Activated naive CD4-positive, alpha-beta T cell treated with anti-CD3 and anti-CD28 coated beads for 36 hours (primary cell): ENCODE measurements at regions of chr10 and their contacts with region 1.

Region 1: DNA sequence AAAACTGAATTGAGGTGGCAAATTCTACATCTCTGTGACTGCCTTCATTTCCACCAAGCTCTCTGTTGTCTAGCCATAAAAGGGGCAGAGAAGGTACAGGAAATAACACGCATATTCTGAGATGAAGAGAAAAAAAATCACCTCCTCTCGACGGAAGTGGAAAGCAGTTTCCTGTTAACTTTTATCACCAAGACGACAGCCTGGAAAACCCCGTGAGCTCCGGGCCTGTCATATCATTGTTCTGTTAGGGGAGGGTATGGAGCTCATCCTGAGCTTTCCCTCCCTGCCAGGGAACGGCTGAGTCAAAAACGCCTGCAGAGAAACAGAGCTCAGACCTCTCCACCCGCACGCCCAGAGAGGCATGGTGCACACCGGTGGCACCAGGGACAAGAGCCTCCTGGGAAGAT is 200.3 kb downstream of the PRPF18 start:
- DNase-seq: peak; percentile 92
- H3K4me3 Mint-ChIP-seq: peak overlapping the region; percentile 45
- H3K27ac Mint-ChIP-seq: peak overlapping the region; percentile 93
- H3K4me1 Mint-ChIP-seq: peaks cover 33% of the 10 kb centered on the region
- H3K27me3 Mint-ChIP-seq: no peaks in the 10 kb centered on the region

Region 2: GRCh38 chr10:13348216-13349017 is 438.6 kb before region 1 on chr10 and contains the start of gene SEPHS1:
- CTCF ChIA-PET with region 1: no interaction called
- intact Hi-C with region 1: loop called (anchors 1 kb)
- DNase-seq: peak; percentile 91
- H3K4me3 Mint-ChIP-seq: peak within 1 kb of the TSS; percentile 88
- H3K27ac Mint-ChIP-seq: peak within 1 kb of the TSS; percentile 94
- H3K4me1 Mint-ChIP-seq: peaks cover 57% of the 10 kb centered on the region
- H3K27me3 Mint-ChIP-seq: no peaks in the 10 kb centered on the region
- total RNA-seq, gene SEPHS1: 75.6 to 79.6 TPM

Region 3: DNA sequence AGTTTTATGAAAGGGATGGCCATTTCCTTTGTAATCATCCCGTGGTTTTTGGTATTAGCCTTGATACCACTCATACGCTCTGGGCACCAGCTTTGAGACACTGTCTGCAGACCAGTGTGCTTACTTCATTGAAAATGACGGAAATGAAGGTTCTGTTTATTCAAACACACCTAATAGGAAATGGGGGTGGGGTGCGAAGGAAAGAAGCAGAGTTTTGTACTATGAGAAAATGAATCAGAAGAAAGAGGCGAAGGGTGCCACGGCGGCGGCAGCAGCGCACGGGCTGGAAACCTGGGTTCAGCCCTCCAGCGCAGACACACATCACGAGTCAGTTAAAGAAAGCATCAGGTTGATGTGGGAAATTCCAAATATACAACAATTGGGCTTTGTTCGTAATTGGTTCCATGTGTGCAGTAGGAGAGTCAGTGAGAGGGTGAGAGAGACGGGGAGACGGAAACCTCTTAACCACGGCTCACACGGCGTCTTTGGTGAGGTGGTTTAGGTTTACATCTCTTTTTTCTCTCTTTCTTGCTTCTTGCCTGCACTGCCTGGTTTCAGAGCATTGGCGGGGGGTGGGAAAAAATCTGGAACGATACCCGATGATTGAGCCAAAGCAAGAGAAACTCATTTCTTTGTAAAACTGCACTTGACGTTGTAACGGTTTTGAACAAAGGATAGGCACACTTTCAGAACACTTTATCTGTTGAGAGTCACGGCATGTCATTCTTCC is 222.5 kb after region 1 on chr10:
- CTCF ChIA-PET with region 1: no interaction called
- intact Hi-C with region 1: loop called (anchors 1 kb)
- DNase-seq: peak; percentile 84
- H3K4me3 Mint-ChIP-seq: peak overlapping the region; percentile 79
- H3K27ac Mint-ChIP-seq: peak overlapping the region; percentile 90
- H3K4me1 Mint-ChIP-seq: peaks cover 35% of the 10 kb centered on the region
- H3K27me3 Mint-ChIP-seq: no peaks in the 10 kb centered on the region

Region 4: GRCh38 chr10:14385596-14386593 is 598.9 kb after region 1 on chr10:
- CTCF ChIA-PET with region 1: no interaction called
- intact Hi-C with region 1: loop called (anchors 1 kb)
- DNase-seq: peak; percentile 67
- H3K4me3 Mint-ChIP-seq: no peak overlapping the region
- H3K27ac Mint-ChIP-seq: no peak overlapping the region
- H3K4me1 Mint-ChIP-seq: peaks cover 80% of the 10 kb centered on the region
- H3K27me3 Mint-ChIP-seq: peaks cover 3% of the 10 kb centered on the region

Region 5: DNA sequence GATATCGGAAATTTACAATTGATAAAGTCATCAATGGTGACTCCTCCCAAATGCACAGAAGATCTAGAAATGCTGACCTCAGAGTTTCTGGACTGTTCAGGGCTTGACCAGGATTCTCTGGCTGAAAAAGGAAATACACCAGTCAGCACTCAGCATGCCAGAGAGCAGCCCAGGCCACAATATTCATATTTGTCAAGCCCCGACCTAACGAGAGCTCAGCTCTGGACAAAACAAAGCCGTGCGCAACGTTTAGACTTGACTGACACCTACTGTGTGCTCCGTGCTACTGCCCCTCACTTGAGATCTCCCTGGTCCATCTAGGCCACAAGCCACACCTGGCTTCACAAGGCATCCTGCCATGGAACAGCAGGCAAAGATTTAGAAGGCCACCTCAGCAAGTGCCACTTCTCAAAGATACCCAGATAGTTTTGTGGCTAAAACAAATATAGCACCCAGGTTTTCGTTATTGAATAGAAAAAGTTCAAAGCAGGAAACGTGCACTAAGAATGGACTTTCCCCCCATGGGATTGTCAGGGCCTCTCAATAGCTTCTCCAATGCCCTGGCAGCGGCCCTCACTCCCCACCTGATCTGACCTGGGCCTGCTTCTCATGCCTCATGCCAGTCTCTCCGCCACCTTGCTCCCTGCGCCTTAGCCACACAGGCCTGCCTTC is 769.4 kb after region 1 on chr10:
- CTCF ChIA-PET with region 1: no interaction called
- intact Hi-C with region 1: no loop called
- DNase-seq: no peak
- H3K4me3 Mint-ChIP-seq: no peak overlapping the region
- H3K27ac Mint-ChIP-seq: peak overlapping the region; percentile 55
- H3K4me1 Mint-ChIP-seq: peaks cover 90% of the 10 kb centered on the region
- H3K27me3 Mint-ChIP-seq: no peaks in the 10 kb centered on the region

Region 6: GRCh38 chr10:14837757-14838581 is 1051.0 kb after region 1 on chr10 and contains the starts of genes CDNF, HSPA14 and MSANTD7:
- CTCF ChIA-PET with region 1: no interaction called
- intact Hi-C with region 1: loop called (anchors 2 kb)
- DNase-seq: peak; percentile 99
- H3K4me3 Mint-ChIP-seq: peak within 1 kb of the TSS; percentile 92
- H3K27ac Mint-ChIP-seq: peak within 1 kb of the TSS; percentile 93
- H3K4me1 Mint-ChIP-seq: peaks cover 22% of the 10 kb centered on the region
- H3K27me3 Mint-ChIP-seq: no peaks in the 10 kb centered on the region
- total RNA-seq, gene CDNF: 1.6 to 1.8 TPM
- total RNA-seq, gene HSPA14: 28.1 to 29.9 TPM
- total RNA-seq, gene MSANTD7: 19.6 to 21.3 TPM